B cell (primary cell): ENCODE measurements at regions of chr10 and their contacts with region 1.

Region 1: GRCh38 chr10:63241841-63242281 is 108.7 kb downstream of the NRBF2 start:
- DNase-seq: peak; percentile 36
- ATAC-seq: peak; percentile 43
- H3K4me3 ChIP-seq: peak overlapping the region; percentile 14 to 60 (median 23)
- H3K4me3 Mint-ChIP-seq: peak overlapping the region; percentile 69
- H3K27ac ChIP-seq: peak overlapping the region; percentile 27 to 53
- H3K27ac Mint-ChIP-seq: peak overlapping the region; percentile 84
- H3K4me1 ChIP-seq: peaks cover 59 to 74% of the 10 kb centered on the region in 2 donors
- H3K4me1 Mint-ChIP-seq: peaks cover 76% of the 10 kb centered on the region
- H3K27me3 ChIP-seq: no peaks in the 10 kb centered on the region
- H3K27me3 Mint-ChIP-seq: no peaks in the 10 kb centered on the region
- CTCF ChIP-seq: no peak

Region 2: GRCh38 chr10:63227207-63227915 is 14.5 kb before region 1 on chr10:
- CTCF ChIA-PET with region 1: no interaction called
- POLR2A ChIA-PET with region 1: no interaction called
- intact Hi-C with region 1: loop called (anchors 2 kb)
- DNase-seq: no peak
- ATAC-seq: no peak
- H3K4me3 ChIP-seq: no peak overlapping the region
- H3K4me3 Mint-ChIP-seq: no peak overlapping the region
- H3K27ac ChIP-seq: peak overlapping the region; percentile 1 to 3
- H3K27ac Mint-ChIP-seq: peak overlapping the region; percentile 65
- H3K4me1 ChIP-seq: peaks cover 18 to 32% of the 10 kb centered on the region in 2 donors
- H3K4me1 Mint-ChIP-seq: peaks cover 65% of the 10 kb centered on the region
- H3K27me3 ChIP-seq: no peaks in the 10 kb centered on the region
- H3K27me3 Mint-ChIP-seq: no peaks in the 10 kb centered on the region
- CTCF ChIP-seq: no peak

Region 3: GRCh38 chr10:63256009-63256773 is 14.3 kb after region 1 on chr10:
- CTCF ChIA-PET with region 1: interaction called, 3 read pairs
- POLR2A ChIA-PET with region 1: interaction called, 7 read pairs
- intact Hi-C with region 1: loop called (anchors 1 kb)
- DNase-seq: peak; percentile 47
- ATAC-seq: peak; percentile 42
- H3K4me3 ChIP-seq: peak overlapping the region in 1 of 5 experiments; percentile 32
- H3K4me3 Mint-ChIP-seq: peak overlapping the region; percentile 83
- H3K27ac ChIP-seq: peak overlapping the region; percentile 34 to 73
- H3K27ac Mint-ChIP-seq: peak overlapping the region; percentile 88
- H3K4me1 ChIP-seq: peaks cover 81 to 92% of the 10 kb centered on the region in 2 donors
- H3K4me1 Mint-ChIP-seq: peaks cover 85% of the 10 kb centered on the region
- H3K27me3 ChIP-seq: no peaks in the 10 kb centered on the region
- H3K27me3 Mint-ChIP-seq: no peaks in the 10 kb centered on the region
- CTCF ChIP-seq: no peak